Right ventricle myocardium superior (tissue), 1 donor: ENCODE measurements at regions of chr18 and their contacts with region 1.

Region 1: GRCh38 chr18:24488824-24489493 is 28.5 kb downstream of the HRH4 start:
- DNase-seq: no peak
- ATAC-seq: peak; percentile 70

Region 2: DNA sequence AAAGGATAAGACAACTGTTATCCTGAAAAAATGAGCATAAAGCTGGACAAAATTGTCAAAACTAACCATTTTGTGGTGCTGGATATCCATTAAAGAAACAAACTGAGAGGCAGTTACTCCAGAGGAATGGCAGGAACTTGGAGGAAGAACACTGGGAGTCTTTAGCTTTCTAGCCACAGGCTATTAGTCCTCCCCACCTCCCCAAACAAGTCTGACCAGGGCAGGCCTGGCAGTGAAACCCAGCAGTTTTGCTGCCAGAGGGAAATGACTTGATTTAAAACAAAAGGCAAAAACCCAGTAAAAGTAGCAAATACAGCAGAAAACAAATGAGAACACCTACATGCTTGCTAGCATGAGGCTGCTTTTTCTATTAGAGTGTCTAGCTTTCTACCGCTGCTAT is 126.2 kb before region 1 on chr18:
- intact Hi-C with region 1: loop called (anchors 5 kb)
- DNase-seq: no peak
- ATAC-seq: no peak

Region 3: DNA sequence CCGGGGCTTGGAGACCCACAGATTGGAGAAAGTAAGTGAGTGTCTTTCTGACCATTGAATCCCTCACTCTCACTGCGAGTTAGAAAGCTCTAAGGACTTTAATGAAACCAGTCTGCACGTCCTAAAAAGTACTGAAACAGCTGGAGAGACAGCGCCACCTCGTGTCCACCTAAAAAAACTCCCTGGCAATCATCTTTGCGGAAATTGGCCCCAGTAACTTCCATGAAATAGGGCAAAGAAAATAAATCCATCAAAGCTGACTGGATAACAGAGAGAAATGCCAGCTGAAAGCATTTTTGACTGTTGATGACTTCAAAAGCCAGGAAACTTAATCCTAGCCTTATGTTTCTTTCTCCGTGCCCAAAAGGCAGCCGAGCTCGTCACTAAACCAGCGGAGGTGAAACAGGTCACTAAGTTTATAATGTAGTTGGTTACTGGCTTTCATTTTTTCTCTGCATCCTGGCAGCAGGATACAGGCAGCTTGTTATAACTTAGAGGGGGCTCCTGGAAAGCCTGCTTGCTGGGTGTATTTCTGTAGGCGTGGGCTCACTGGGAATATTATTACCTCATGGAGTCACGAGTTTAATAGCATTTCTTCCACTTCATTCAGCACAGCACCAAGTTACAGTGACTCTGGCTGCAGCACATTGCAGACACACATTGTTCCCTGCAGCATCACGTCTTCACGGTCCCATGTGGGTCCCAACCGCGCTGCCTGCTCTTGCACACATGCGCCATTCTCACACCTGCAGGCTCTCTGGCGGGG is 238.0 kb after region 1 on chr18:
- intact Hi-C with region 1: loop called (anchors 5 kb)
- DNase-seq: peak; percentile 48
- ATAC-seq: peak; percentile 84